ENCODE measurements at regions of chr20 and their contacts with region 1.

Region 1: DNA sequence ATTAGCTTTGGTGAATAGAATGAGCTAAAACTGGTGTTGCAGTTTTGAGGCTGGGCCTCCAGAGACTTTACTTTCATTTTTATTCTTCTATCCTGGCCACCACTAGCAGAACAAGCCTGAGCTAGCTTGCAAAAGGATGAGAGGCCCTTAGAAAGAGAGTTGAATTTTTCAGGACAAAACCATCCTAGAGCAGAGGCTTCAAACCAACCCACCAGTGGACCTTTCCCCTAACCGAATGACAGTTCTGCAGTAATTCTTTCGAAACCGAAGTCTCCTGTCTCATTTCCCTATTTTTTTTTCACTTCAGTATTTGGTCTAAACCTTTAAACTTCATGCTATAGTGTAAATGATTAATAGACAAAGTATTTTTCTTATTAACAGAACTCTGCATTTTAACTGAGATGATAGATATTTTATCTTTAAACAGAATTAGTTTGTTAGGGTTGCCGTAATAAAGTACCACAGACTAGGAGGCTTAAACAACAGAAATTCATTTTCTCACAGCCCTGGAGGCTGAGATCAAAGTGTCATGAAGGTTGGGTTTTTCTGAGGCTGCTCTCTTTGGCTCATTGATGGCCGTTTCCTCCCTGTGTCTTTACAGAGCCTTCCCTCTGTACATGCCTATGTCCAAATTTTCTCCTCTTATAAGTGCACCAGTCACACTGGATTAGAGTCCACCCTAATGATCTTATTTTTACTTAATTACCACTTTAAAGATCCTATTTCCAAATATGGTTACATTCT is 80.6 kb upstream of the PAK5 start:
- H3K4me3 Mint-ChIP-seq: no peak overlapping the region
- H3K27ac Mint-ChIP-seq: peak overlapping the region; percentile 82
- H3K4me1 Mint-ChIP-seq: peaks cover 39% of the 10 kb centered on the region
- H3K27me3 Mint-ChIP-seq: peaks cover 1% of the 10 kb centered on the region

Region 2: DNA sequence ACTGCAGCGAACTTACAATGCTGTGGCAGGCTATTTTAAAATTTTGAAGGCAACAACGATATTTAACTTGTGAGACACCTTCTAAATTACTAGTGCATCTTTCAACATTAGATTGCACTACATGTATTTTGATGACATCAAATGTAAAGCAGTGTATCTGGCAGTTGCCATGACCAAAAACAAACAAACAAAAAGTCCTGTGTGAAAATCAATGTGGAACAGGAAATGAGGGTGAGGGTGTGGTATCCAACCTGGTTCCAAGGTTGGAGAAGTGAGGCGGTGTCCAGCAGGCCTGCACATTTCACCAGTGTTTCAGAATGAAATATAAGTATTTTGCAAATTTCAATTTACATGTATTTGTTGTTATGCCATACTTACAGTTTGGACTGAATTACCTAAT is 293.1 kb before region 1 on chr20:
- intact Hi-C with region 1: loop called (anchors 5 kb)
- H3K4me3 Mint-ChIP-seq: no peak overlapping the region
- H3K27ac Mint-ChIP-seq: no peak overlapping the region
- H3K4me1 Mint-ChIP-seq: peaks cover 42% of the 10 kb centered on the region
- H3K27me3 Mint-ChIP-seq: peaks cover 34% of the 10 kb centered on the region

Measured in dendritic cell treated with granulocyte-macrophage colony-stimulating factor and Interleukin-4, amounts not matched to agents 40 ng/mL and 50 ng/mL, for 4 days (primary cell).